Tibial artery (tissue), 4 donors: ENCODE measurements at regions of chrX and their contacts with region 1.

Region 1: DNA sequence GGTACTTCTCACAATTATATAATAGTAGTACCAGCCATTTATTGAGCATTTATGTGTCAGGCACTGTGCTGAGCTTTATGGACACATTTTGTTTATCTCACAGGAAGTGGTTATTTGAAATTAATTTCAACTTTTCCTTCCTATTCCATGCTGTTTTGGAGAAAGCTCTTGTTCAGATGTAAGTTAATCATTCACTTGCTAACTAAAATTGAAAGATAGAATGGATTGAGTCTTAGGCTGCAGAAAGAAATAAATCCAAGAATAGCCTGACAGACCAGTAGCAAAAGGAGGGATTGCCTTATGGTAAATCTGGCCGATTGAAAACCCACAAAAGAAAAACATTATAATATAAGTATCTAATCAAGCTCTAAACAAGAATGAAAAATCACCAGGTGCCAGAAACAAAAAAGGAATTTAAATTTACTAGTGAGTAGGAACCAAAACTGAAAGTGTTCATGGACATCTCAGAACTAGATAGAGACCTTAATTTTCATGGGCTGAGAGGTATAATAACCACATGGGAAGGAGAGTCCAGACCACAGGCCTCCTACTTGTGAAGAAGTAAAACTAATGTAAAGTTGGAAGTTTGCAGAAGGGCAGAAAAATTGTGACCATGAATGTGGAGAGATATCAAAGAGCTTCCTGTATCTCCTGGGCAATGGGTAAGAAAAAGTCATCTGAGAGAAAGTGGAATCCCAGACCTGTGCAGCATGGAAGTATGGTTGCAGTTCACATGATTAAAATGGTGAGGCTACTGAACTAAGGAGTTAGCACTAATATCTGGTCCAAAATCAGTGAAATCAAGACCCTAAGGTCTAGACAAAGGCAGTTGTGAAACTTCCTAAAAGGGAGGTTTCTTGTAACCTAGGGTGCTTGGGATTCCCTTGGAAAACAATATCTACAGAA is 38.0 kb downstream of the RADX start:
- DNase-seq: no peak
- H3K4me3 ChIP-seq: no peak overlapping the region
- H3K27ac ChIP-seq: no peak overlapping the region
- H3K4me1 ChIP-seq: no peaks in the 10 kb centered on the region
- H3K27me3 ChIP-seq: no peaks in the 10 kb centered on the region
- CTCF ChIP-seq: no peak

Region 2: DNA sequence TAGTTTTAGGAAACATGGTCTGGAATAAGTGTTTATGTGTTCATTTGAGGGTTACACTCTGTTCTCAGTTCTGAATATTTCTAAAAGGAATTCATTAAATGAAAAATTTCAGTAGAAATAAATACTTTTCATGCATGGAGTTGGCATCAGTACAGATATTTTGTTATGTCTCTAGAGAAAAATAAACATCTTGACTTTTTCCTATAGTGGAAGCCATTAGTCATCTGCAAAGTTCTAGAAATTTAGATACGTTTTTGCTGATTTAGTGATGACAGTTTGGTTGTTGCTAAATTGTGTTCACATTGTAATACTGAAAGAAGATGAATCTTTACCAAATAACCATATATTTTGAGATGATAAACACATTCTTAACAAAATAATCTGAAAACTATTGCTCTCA is 1161.1 kb before region 1 on chrX:
- intact Hi-C with region 1: loop called (anchors 5 kb)
- DNase-seq: no peak
- H3K4me3 ChIP-seq: no peak overlapping the region
- H3K27ac ChIP-seq: no peak overlapping the region
- H3K4me1 ChIP-seq: no peaks in the 10 kb centered on the region
- H3K27me3 ChIP-seq: no peaks in the 10 kb centered on the region
- CTCF ChIP-seq: no peak

Region 3: GRCh38 chrX:107102975-107103374 is 453.2 kb after region 1 on chrX:
- intact Hi-C with region 1: no loop called
- DNase-seq: no peak
- H3K4me3 ChIP-seq: no peak overlapping the region
- H3K27ac ChIP-seq: no peak overlapping the region
- H3K4me1 ChIP-seq: no peaks in the 10 kb centered on the region
- H3K27me3 ChIP-seq: no peaks in the 10 kb centered on the region
- CTCF ChIP-seq: no peak